ENCODE measurements at regions of chr9 and their contacts with region 1.

Region 1: DNA sequence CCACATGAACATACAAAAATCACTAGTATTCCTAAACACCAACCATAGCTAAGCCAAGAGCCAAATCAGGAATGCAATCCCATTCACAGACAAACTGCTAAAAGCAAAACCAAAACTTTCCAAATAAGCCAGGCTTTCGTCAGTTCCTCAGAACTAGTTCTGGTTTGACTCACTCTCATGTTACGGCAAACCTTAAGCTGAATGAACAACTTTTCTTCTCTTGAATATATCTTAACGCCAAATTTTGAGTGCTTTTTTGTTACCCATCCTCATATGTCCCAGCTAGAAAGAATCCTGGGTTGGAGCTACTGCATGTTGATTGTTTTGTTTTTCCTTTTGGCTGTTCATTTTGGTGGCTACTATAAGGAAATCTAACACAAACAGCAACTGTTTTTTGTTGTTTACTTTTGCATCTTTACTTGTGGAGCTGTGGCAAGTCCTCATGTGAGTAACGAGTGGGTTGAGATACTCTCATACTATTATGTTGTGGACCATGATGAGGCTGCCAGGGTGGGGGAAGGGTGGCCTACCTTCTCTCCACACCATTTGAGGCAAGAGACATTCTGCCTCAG is at the start of gene PDCD1LG2:
- DNase-seq: peak; percentile 66
- H3K4me3 Mint-ChIP-seq: peak within 1 kb of the TSS; percentile 66
- H3K27ac Mint-ChIP-seq: peak within 1 kb of the TSS; percentile 91
- H3K4me1 Mint-ChIP-seq: peaks cover 44% of the 10 kb centered on the region
- H3K27me3 Mint-ChIP-seq: no peaks in the 10 kb centered on the region
- CTCF ChIP-seq: no peak
- total RNA-seq, gene PDCD1LG2: 1.8 and 3.2 TPM in 2 replicates

Region 2: DNA sequence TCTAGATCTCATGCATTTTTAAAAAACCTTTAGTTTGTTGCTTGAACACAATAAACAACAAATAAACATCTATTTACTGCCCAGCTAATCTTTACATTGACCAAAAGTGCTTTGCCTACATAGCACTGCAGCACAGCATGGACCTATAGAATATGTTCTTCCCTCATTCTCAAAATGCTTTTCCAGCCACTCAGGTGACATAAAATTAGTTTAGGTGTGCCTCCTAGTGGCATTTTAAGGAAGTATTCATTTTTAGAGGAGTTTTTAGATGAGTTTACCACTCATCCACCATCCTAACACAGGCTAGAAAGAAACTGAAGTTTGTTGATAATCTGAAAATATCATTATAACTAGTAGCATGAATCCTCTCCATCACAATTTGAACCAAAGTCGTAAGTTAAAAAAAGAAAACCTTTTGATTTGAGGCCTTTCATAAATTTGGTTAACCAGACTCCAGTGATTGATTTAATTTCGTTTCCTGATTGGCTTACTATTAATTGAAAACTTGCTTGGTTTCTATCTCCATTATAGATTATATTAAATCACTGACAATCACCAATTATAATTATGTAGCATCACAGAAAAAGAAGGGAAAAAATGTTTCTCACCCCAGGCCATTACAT is 85.3 kb before region 1 on chr9:
- CTCF ChIA-PET with region 1: no interaction called
- POLR2A ChIA-PET with region 1: no interaction called
- intact Hi-C with region 1: no loop called
- DNase-seq: peak; percentile 44
- H3K4me3 Mint-ChIP-seq: no peak overlapping the region
- H3K27ac Mint-ChIP-seq: no peak overlapping the region
- H3K4me1 Mint-ChIP-seq: no peaks in the 10 kb centered on the region
- H3K27me3 Mint-ChIP-seq: no peaks in the 10 kb centered on the region
- CTCF ChIP-seq: peak; percentile 51

Region 3: GRCh38 chr9:5459289-5459829 is 51.1 kb before region 1 on chr9:
- CTCF ChIA-PET with region 1: interaction called, 4 read pairs
- POLR2A ChIA-PET with region 1: interaction called, 3 read pairs
- intact Hi-C with region 1: loop called (anchors 5 kb)
- DNase-seq: peak; percentile 43
- H3K4me3 Mint-ChIP-seq: no peak overlapping the region
- H3K27ac Mint-ChIP-seq: no peak overlapping the region
- H3K4me1 Mint-ChIP-seq: peaks cover 8% of the 10 kb centered on the region
- H3K27me3 Mint-ChIP-seq: no peaks in the 10 kb centered on the region
- CTCF ChIP-seq: no peak

Region 4: GRCh38 chr9:5554254-5554653 is 43.8 kb after region 1 on chr9:
- CTCF ChIA-PET with region 1: no interaction called
- POLR2A ChIA-PET with region 1: interaction called, 6 read pairs
- intact Hi-C with region 1: loop called (anchors 5 kb)
- DNase-seq: no peak
- H3K4me3 Mint-ChIP-seq: no peak overlapping the region
- H3K27ac Mint-ChIP-seq: no peak overlapping the region
- H3K4me1 Mint-ChIP-seq: peaks cover 16% of the 10 kb centered on the region
- H3K27me3 Mint-ChIP-seq: no peaks in the 10 kb centered on the region
- CTCF ChIP-seq: no peak